ENCODE measurements at regions of chr13 and their contacts with region 1.

Region 1: GRCh38 chr13:112443995-112444860 is 68.1 kb downstream of the SPACA7 start:
- DNase-seq: peak in 2 of 3 donors; percentile 73 to 82
- ATAC-seq: peak; percentile 91
- H3K4me3 ChIP-seq: no peak overlapping the region
- H3K4me1 ChIP-seq: no peaks in the 10 kb centered on the region
- CTCF ChIP-seq: peak; percentile 82

Region 2: DNA sequence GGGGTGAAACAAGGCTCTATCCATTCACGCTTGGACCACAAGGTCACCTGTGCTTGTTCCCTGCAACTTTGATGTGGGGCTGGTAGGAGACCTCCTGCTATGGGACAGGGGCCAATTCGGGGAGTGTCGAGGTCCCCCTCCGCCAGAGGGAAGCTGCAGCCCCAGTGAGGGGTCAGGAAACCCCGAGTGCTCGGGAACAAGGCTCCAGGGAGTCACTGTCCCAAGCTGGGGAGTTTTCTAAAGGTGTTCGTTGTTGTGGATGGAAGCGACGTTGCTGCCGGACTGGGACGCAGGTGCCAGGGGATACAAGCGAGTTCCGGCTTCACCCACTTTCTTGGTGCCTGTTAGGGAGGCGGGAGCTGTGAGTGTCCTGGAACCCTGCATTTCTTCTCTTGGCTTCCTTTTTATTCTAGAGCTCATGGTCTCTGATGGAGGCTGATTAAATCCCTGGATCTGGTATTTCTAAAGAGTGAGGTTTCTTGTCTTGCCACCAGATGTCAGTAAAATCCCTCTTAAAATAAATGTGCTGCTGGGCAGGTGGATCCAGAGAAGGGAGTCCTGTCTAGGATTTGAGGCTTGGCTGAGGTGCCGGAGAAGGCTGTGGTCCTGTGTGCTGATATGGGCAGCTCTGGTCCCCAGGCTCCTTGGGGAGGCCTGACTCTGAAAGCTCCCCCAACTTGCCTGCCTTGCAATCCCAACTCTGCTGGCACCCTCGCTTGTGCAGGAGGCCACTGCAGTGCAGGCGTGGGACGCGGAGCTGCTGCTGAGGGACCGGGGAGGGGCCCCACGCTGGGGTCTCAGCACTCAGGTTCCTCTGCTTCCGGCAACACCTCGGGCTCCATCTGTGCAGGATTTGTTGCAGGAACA is 969.9 kb before region 1 on chr13:
- intact Hi-C with region 1: loop called (anchors 5 to 10 kb)
- DNase-seq: peak in 1 of 3 donors; percentile 12
- ATAC-seq: peak; percentile 31
- H3K4me3 ChIP-seq: no peak overlapping the region
- H3K4me1 ChIP-seq: no peaks in the 10 kb centered on the region
- CTCF ChIP-seq: no peak

Region 3: DNA sequence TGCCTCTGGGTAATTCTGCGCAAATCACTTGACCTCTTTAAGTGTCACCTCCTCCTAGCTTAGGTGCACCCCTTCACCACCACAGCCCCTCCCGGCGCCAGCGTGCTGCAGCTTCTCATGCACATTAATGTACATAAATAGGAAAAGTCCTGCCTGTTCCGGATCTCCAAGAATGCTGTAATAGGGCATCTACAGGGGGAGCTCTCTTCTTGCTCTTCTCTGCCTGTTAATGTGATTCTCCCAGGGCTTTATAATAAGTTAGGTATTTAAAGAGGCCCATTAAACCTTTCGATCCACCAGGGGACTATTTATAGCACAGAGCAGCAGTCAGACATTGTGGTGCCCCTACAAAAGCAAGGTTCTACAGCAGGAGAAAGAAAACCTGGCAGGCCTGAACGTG is 342.0 kb before region 1 on chr13:
- intact Hi-C with region 1: loop called in 1 of 2 experiments (anchors 5 kb)
- DNase-seq: peak in 2 of 3 donors; percentile 19 to 55
- ATAC-seq: peak; percentile 71
- H3K4me3 ChIP-seq: no peak overlapping the region
- H3K4me1 ChIP-seq: peaks cover 8% of the 10 kb centered on the region
- CTCF ChIP-seq: no peak

Region 4: GRCh38 chr13:112346173-112346898 is 97.9 kb before region 1 on chr13:
- intact Hi-C with region 1: no loop called
- DNase-seq: no peak
- ATAC-seq: no peak
- H3K4me3 ChIP-seq: no peak overlapping the region
- H3K4me1 ChIP-seq: no peaks in the 10 kb centered on the region
- CTCF ChIP-seq: no peak